ENCODE measurements at regions of chr2 and their contacts with region 1.

Region 1: DNA sequence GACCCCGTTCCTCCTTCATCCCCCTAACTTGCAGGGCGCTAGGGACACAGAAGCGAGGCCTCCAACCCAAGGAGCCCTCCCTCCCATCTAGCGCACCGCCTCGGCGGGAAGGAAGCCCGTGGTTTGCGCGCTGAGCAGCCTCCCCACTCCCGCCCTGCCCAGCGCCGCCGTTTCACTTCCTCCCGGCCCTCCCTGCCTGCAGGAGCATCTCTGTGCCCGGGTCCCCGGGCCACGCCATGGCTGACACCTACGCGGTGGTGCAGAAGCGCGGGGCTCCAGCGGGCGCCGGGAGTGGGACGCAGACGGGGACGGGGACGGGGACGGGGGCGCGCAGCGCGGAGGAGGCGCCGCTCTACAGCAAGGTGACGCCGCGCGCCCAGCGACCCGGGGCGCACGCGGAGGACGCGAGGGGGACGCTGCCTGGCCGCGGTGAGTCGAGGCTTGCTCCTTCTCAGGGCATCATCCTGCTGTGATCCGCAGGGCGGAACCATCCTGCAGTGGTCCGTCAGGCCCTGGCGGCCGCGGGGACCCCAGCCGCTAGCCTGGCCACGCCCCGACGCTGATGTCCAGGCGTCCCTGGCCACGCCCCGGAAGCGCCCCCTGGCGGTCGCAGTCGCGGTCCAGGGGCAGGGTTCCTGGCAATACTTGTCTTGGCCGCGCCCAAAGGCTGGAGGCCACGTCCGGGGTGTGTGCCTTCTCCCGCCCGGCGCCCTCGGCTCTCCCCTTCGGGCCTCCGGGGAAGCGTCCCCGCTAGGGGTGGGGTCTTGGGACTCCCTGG is 16.4 kb downstream of the PTPN18 start:
- DNase-seq: peak; percentile 85
- ATAC-seq: peak; percentile 68
- H3K4me3 Mint-ChIP-seq: peak overlapping the region; percentile 84
- H3K27ac Mint-ChIP-seq: peak overlapping the region; percentile 96
- H3K4me1 Mint-ChIP-seq: peaks cover 60% of the 10 kb centered on the region
- H3K27me3 Mint-ChIP-seq: no peaks in the 10 kb centered on the region

Region 2: DNA sequence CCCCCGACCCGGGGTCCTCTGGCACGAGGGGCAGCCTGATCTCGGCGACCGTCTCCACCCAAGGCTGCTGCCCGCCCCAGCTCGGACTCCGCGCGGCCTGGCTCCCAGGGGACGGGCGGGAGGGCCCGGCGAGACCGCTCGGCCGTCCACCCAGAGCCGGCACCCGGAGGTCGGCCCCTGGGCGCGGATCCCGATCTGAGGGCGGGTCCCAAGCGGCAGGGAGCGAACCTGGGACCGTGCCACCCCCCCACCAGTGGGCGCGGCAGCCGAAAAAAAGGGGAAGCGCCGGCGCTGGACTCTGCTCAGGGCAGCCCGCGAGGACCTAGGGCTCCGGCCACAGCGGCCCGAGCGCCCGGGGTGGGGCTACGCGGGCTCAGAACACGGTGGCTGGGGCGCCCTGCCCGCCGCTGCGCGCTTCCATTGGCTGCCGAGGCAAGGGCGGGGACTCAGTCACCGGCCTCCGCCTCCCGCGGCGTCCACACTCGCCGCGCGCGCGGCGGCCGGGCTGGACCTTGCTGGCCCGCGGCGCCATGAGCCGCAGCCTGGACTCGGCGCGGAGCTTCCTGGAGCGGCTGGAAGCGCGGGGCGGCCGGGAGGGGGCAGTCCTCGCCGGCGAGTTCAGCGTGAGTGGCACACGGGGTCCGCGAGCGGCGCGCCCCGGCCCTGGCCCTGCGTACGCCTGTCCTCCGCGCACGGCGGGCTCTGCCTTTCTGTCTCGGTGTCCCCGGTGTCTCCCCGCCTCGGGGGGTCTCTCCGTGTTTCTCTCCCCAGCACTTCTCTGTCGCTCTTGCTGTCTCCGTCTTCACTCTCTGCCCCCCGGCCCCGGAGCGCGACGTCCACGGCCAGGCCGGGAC is 16.4 kb before region 1 on chr2 and contains the start of gene PTPN18:
- CTCF ChIA-PET with region 1: interaction called, 3 read pairs
- POLR2A ChIA-PET with region 1: no interaction called
- intact Hi-C with region 1: loop called in 1 of 2 experiments (anchors 1 kb)
- DNase-seq: peak; percentile 76
- ATAC-seq: peak; percentile 96
- H3K4me3 Mint-ChIP-seq: peak within 1 kb of the TSS; percentile 67
- H3K27ac Mint-ChIP-seq: peak within 1 kb of the TSS; percentile 43
- H3K4me1 Mint-ChIP-seq: peaks cover 8% of the 10 kb centered on the region
- H3K27me3 Mint-ChIP-seq: no peaks in the 10 kb centered on the region
- total RNA-seq, gene PTPN18: 41.6 to 49.3 TPM

Region 3: GRCh38 chr2:130824492-130825061 is 452.3 kb after region 1 on chr2:
- CTCF ChIA-PET with region 1: no interaction called
- POLR2A ChIA-PET with region 1: no interaction called
- intact Hi-C with region 1: loop called in 1 of 2 experiments (anchors 2 kb)
- DNase-seq: peak; percentile 80
- ATAC-seq: peak; percentile 95
- H3K4me3 Mint-ChIP-seq: peak overlapping the region; percentile 35
- H3K27ac Mint-ChIP-seq: peak overlapping the region; percentile 89
- H3K4me1 Mint-ChIP-seq: peaks cover 20% of the 10 kb centered on the region
- H3K27me3 Mint-ChIP-seq: no peaks in the 10 kb centered on the region